Thyroid gland (tissue), 4 donors: ENCODE measurements at regions of chr5 and their contacts with region 1.

Region 1: DNA sequence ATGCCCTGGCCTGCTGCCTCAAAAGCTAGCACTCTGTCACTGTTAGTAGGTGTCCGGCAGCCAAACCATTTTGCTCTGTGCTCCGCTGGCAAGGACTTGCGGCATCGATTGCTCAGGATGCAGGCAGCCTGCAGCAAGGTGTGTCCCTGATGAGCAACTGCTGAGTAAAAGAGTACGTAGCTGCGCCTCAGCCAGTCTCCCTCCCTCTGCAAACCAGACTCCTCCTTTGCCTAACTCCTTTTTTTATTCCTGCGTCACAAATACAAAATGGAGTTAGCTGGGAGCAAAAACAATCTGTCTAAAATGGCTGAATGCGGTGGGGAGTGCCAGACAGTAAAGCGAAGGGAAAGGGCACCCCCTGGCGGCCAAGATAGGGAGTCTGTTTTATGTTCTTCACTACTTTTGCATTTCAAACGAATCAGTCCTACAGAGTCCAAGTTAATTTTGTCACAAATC is 61.1 kb downstream of the DIAPH1 start:
- DNase-seq: peak; percentile 73 to 81
- H3K4me3 ChIP-seq: peak overlapping the region in 1 of 3 donors; percentile 1
- H3K27ac ChIP-seq: peak overlapping the region; percentile 31 to 96 (median 92)
- H3K4me1 ChIP-seq: peaks cover 18 to 28% of the 10 kb centered on the region in 2 donors
- H3K27me3 ChIP-seq: no peaks in the 10 kb centered on the region
- CTCF ChIP-seq: peak; percentile 61 to 78 (median 70)
- POLR2A ChIP-seq: no peak

Region 2: GRCh38 chr5:141419074-141419880 is 138.4 kb before region 1 on chr5:
- intact Hi-C with region 1: loop called (anchors 5 kb)
- DNase-seq: no peak
- H3K4me3 ChIP-seq: no peak overlapping the region
- H3K27ac ChIP-seq: no peak overlapping the region
- H3K4me1 ChIP-seq: no peaks in the 10 kb centered on the region
- H3K27me3 ChIP-seq: no peaks in the 10 kb centered on the region
- CTCF ChIP-seq: no peak
- POLR2A ChIP-seq: no peak

Region 3: DNA sequence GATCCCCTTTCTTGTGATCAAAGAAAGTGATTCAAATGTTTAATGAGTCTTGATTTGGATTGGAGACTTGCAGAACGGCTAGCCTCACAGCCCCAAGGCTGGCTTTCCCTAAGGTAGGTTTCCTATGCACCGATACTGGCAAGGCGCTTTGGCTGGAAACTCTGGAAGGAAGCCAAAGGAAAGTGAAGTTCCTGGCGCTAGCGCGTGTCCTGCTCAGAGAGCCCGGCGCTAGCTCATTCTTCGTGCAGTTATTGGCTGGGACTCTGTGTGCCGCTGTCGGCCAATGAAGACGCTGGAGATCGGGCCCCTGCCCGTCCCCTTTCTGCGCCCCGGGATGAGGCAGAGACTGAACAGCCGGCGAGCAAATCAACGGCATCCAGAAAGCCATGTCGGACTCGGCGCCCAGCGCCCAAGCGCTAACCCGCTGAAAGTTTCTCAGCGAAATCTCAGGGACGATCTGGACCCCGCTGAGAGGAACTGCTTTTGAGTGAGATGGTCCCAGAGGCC is 82.0 kb before region 1 on chr5 and contains the start of gene PCDHGC3:
- intact Hi-C with region 1: loop called (anchors 10 kb)
- DNase-seq: peak; percentile 93 to 94
- H3K4me3 ChIP-seq: peak within 1 kb of the TSS; percentile 1 to 71 (median 44)
- H3K27ac ChIP-seq: peak within 1 kb of the TSS; percentile 49 to 86 (median 77)
- H3K4me1 ChIP-seq: peaks cover 14 to 35% of the 10 kb centered on the region in 2 donors
- H3K27me3 ChIP-seq: no peaks in the 10 kb centered on the region
- CTCF ChIP-seq: peak in 4 of 6 experiments; percentile 26 to 58 (median 28)
- POLR2A ChIP-seq: peak in 1 of 2 donors; percentile 71
- total RNA-seq, gene PCDHGC3: 24.7 to 31.5 (median 27.6) TPM